ENCODE measurements at regions of chr15 and their contacts with region 1.

Region 1: DNA sequence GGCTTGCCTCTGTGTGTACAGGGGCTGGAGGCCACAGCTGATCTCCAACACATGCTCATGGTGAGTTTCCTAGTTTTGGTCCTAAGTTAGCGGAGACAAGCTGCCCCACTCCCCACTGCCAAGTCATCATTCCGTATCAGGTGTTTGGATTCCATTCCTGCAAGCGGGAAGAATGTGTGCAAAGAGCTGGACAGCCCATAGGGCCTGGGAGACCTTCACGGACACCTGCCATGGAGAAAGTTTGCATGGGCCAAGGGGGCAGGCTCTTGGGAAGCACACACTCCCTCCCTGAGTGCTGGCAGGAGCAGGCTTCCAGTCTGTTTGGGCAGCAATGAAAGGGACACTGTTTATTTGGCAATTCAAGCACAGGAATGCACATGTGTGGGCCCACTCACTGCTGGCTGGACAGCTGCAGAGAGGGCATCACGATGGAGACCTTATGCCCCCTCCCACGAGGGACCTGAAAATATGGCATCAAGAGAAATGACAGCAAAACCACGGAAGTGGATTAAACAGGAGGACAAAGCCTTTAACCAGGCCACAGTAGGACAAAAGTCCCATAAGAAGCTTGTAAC is 149.7 kb downstream of the KLF13 start:
- DNase-seq: no peak
- H3K4me3 ChIP-seq: no peak overlapping the region
- CTCF ChIP-seq: no peak

Region 2: GRCh38 chr15:31214864-31215489 is 261.3 kb before region 1 on chr15:
- in situ Hi-C with region 1: loop called (anchors 5 kb)
- DNase-seq: no peak
- H3K4me3 ChIP-seq: peak overlapping the region; percentile 37
- CTCF ChIP-seq: no peak

Region 3: DNA sequence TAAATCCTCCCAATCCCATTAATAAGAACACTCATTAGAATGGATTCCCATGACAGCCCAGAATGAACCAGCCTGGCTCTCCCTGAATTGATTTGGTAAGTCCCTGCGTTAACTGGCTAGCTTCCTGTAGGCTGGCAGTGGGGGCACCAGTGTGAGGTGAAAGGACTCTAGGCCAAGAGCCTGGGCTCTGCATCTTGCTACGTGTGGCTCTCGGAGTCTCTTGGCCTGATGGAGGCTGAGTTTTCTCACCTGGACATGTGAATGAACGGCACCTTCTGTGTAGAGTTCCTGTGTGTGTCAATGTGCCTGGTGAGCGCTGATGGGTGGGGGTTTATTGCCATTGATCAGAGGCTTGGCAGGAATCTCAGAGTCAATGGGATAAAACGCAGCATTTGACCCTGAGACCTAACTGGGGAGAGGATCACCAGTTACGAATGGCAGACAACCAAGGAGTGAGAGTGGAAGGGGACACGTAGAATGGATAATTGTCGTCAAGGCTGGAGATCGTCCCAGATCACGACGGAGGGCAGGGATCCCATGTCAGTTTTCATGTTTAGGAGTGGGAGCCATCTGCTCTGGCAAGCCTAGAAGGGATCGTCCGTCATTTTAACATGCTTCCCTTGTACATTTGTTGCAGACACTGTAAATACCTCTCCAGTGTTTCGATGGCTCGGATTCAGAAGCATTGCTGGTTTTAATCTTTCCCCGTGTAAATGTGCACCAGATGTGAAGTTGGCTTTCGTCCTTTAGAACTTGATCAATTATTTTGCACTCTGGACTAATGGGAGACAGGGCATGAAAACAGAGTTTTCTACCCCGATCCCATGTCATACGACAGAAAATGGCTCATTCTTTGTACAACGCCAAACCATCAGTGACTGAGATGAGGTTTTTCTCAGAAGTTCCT is 158.6 kb before region 1 on chr15:
- in situ Hi-C with region 1: loop called (anchors 5 kb)
- DNase-seq: no peak
- H3K4me3 ChIP-seq: no peak overlapping the region
- CTCF ChIP-seq: no peak

Region 4: DNA sequence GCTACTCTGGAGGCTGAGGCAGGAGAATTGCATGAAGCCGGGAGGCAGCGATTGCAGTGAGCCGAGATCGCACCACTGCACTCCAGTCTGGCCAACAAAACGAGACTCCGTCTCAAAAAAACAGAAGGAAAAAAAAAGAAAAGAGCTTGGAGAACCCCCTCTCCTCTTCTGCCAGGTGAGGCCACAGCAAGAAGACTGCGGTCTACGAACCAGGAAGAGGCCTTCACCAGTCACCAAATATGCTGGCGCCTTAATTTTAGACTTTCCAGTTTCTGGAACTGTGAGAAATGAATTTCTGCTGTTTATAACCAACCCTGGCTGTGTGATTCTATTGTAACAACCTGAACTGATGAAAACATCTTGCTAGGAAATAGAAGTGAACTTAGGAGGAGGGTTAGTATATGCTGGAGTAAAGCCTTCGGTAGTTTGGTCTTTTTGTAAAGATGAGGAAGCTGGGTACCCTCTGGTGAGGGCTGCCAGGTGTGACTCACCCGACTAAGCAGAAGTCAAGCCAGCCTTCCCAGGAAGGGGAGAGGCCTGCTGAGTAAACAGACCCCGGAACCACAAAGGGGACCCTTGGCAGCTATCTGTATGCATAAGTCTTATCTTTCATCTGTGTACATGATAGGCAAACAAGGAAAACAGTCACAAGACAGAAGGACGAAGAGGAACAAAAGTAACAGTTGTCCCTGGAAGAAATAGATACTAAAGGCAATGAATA is 71.0 kb before region 1 on chr15:
- in situ Hi-C with region 1: loop called (anchors 5 kb)
- DNase-seq: no peak
- H3K4me3 ChIP-seq: no peak overlapping the region
- CTCF ChIP-seq: no peak

Measured in astrocyte of the cerebellum (primary cell).